GM10248 (cell line): ENCODE measurements at regions of chr16 and their contacts with region 1.

Region 1: GRCh38 chr16:46947900-46948547 is 25.4 kb downstream of the DNAJA2 start:
- DNase-seq: peak; percentile 64
- CTCF ChIP-seq: peak; percentile 37

Region 2: GRCh38 chr16:46961373-46962353 is 13.6 kb after region 1 on chr16:
- CTCF ChIA-PET with region 1: interaction called, 12 read pairs
- POLR2A ChIA-PET with region 1: no interaction called
- DNase-seq: no peak
- CTCF ChIP-seq: no peak

Region 3: GRCh38 chr16:47046726-47047523 is 98.9 kb after region 1 on chr16:
- CTCF ChIA-PET with region 1: interaction called, 14 read pairs
- POLR2A ChIA-PET with region 1: interaction called, 3 read pairs
- DNase-seq: peak; percentile 67
- CTCF ChIP-seq: no peak